Activated B cell treated with CpG ODN at 0.5 μM for 24 hours (primary cell): ENCODE measurements at regions of chr16 and their contacts with region 1.

Region 1: DNA sequence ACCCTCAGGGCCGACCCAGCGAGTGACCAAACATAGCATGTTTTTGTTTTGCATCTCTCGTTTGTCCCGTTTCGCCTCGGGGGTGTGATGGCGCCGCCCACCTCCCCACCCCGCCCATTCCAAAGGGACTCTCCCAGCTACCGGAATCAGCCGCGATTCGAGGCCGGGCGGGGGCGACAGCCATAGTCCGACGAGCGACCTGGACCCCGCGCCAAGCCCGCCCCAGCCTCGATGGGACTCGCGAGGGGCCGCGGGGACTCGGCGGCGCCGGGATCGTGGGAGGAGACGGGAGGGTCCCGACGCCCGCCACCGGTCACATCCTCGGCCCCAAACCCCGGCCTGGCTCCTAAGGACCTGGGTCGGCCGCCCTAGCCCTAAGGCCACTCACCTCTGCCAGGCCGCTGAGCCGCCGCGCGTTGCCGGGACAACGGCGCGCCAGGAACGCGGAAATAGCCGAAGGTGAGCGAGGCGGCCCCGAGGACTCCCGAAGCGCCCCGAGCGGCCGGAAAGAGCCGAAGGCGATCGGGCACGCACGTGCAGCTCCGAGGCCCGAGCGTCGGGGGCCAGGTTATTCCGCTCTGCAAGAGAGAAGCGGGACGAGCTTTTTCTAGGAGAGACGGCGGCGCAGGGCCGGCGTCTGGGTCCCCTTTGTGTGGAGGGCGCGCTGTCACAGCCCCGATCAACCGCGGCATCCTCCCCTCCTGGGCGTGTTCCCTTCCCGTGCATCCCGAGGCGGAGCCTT is 1.4 kb downstream of the IFT140 start:
- DNase-seq: peak; percentile 95
- ATAC-seq: peak; percentile 55
- H3K4me3 Mint-ChIP-seq: peak overlapping the region; percentile 88
- H3K27ac Mint-ChIP-seq: peak overlapping the region; percentile 12
- H3K4me1 Mint-ChIP-seq: peaks cover 40% of the 10 kb centered on the region
- H3K27me3 Mint-ChIP-seq: peaks cover 5% of the 10 kb centered on the region
- CTCF ChIP-seq: no peak

Region 2: GRCh38 chr16:527006-527753 is 1083.3 kb before region 1 on chr16 and contains the start of gene CAPN15:
- CTCF ChIA-PET with region 1: no interaction called
- POLR2A ChIA-PET with region 1: no interaction called
- intact Hi-C with region 1: loop called (anchors 2 kb)
- DNase-seq: peak; percentile 91
- ATAC-seq: peak; percentile 81
- H3K4me3 Mint-ChIP-seq: peak within 1 kb of the TSS; percentile 86
- H3K27ac Mint-ChIP-seq: peak within 1 kb of the TSS; percentile 82
- H3K4me1 Mint-ChIP-seq: peaks cover 43% of the 10 kb centered on the region
- H3K27me3 Mint-ChIP-seq: no peaks in the 10 kb centered on the region
- CTCF ChIP-seq: no peak
- total RNA-seq, gene CAPN15: 77.0 and 95.1 TPM in 2 replicates

Region 3: DNA sequence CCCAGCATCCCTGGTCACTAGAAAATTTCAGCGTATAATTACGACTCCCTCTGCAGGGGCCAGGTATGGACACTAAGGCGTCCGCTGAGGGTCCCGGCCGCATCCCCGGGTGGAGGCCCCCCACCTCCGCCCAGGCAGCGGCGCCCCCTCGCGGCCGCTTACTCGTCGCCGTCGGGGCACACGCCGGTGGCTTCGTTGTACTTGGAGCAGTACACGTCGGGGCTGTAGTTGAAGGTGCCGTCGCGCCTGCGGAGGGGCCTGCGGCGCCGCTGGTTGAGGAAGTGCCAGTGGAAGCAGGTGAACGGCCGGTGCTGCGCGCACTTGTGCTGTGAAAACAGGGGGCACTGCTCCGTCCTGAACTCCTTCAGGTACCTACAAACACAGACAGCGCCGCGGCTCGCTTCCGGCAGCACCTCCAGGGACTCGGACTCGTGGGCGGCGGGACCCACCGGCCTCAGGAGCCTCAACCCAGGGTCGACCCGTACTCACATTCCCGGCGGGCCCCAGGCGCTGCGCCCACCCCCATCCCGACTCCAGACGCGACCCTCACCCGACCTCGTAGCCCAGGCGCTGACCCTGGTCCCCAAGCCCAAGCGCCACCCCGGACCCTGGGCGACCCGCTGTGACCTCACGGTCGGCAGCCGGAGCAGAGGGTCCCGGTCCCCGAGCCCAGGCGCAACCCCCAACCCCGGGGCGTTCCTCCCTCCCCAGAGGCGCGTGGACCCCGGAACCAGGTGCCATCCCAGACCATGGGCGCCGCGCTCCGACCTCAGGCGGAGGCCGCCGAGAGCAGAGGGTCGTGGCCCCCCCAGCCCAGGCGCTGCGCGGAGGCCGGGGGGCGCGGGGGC is 196.5 kb before region 1 on chr16:
- CTCF ChIA-PET with region 1: no interaction called
- POLR2A ChIA-PET with region 1: no interaction called
- intact Hi-C with region 1: loop called (anchors 5 kb)
- DNase-seq: peak; percentile 61
- ATAC-seq: peak; percentile 64
- H3K4me3 Mint-ChIP-seq: peak overlapping the region; percentile 88
- H3K27ac Mint-ChIP-seq: peak overlapping the region; percentile 85
- H3K4me1 Mint-ChIP-seq: peaks cover 22% of the 10 kb centered on the region
- H3K27me3 Mint-ChIP-seq: no peaks in the 10 kb centered on the region
- CTCF ChIP-seq: no peak

Region 4: GRCh38 chr16:1474796-1475551 is 135.5 kb before region 1 on chr16 and contains the start of gene CLCN7:
- CTCF ChIA-PET with region 1: no interaction called
- POLR2A ChIA-PET with region 1: interaction called, 5 read pairs
- intact Hi-C with region 1: loop called (anchors 1 kb)
- DNase-seq: peak; percentile 91
- ATAC-seq: peak; percentile 84
- H3K4me3 Mint-ChIP-seq: peak within 1 kb of the TSS; percentile 89
- H3K27ac Mint-ChIP-seq: peak within 1 kb of the TSS; percentile 92
- H3K4me1 Mint-ChIP-seq: peaks cover 63% of the 10 kb centered on the region
- H3K27me3 Mint-ChIP-seq: no peaks in the 10 kb centered on the region
- CTCF ChIP-seq: no peak
- total RNA-seq, gene CLCN7: 127 and 144 TPM in 2 replicates

Region 5: DNA sequence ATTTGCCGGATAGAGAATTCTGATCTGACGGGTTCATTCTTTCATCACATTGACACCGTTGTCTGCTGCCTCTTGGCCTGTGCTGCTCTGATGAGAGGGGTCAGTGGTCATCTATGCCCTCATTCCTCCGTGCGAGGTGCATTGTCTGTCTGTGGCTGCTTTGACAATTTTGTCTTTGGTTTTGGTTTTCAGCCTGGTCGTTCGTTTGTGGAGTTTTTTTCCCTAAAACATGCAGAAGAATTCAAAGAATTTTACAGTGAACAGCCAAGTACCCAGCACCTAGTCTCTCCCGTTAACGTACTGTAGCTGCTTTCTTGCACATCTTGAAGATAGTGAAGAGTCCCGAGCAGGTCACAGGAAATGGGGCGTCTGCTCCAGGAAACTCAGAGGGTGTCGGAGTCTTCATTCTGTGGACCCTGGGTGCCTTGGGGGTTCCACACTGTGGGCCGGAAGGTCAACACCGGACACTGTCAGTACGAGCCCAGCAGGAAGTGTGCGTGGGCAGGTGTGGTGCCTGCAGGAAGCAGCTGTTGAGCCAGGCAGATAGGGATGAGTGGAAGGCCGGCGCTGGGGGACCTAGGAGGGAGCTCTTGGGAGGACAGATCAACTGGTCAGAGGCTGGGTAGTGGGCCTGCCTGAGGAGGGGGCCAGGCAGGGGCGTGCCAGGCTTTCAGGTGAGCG is 30.0 kb after region 1 on chr16:
- CTCF ChIA-PET with region 1: no interaction called
- POLR2A ChIA-PET with region 1: no interaction called
- intact Hi-C with region 1: no loop called
- DNase-seq: no peak
- ATAC-seq: no peak
- H3K4me3 Mint-ChIP-seq: no peak overlapping the region
- H3K27ac Mint-ChIP-seq: no peak overlapping the region
- H3K4me1 Mint-ChIP-seq: peaks cover 4% of the 10 kb centered on the region
- H3K27me3 Mint-ChIP-seq: no peaks in the 10 kb centered on the region
- CTCF ChIP-seq: no peak

Region 6: DNA sequence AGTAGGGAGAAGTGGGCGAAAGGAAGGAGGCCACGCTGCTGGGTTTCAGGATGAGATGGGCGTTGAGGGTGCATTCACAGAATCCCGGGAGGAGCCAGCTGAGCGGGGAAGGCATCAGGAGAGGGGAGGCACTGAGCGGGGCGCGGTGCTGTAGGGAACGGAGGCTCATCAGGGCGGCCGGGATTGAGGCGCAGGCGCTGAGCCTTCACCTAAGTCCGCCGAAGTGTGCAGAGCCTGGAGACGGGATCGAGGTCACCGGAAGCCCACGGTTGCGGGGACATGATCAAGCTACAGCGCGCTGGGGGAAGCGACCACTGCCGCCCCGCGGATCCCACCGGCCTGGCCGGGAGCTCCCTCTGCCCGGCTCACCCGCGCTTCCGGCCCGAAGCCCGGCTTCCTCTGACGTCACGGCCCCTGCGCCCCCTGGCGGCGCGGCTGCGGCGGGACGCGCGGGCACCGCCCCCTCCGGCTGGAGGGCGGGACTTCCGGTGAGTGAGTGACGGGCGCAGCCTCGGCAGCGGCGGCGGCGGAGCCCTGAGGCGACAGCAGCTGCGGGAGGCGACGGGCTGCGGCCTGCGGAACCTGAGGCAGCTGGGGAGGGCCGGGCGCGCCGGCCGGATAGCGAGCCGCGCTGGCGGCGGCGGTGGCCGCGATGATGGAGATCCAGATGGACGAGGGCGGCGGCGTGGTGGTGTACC is 95.4 kb after region 1 on chr16 and contains the start of gene MAPK8IP3:
- CTCF ChIA-PET with region 1: no interaction called
- POLR2A ChIA-PET with region 1: interaction called, 5 read pairs
- intact Hi-C with region 1: loop called (anchors 5 kb)
- DNase-seq: peak; percentile 100
- ATAC-seq: peak; percentile 81
- H3K4me3 Mint-ChIP-seq: peak within 1 kb of the TSS; percentile 99
- H3K27ac Mint-ChIP-seq: peak within 1 kb of the TSS; percentile 98
- H3K4me1 Mint-ChIP-seq: peaks cover 38% of the 10 kb centered on the region
- H3K27me3 Mint-ChIP-seq: no peaks in the 10 kb centered on the region
- CTCF ChIP-seq: no peak
- total RNA-seq, gene MAPK8IP3: 157 and 201 TPM in 2 replicates

Region 7: DNA sequence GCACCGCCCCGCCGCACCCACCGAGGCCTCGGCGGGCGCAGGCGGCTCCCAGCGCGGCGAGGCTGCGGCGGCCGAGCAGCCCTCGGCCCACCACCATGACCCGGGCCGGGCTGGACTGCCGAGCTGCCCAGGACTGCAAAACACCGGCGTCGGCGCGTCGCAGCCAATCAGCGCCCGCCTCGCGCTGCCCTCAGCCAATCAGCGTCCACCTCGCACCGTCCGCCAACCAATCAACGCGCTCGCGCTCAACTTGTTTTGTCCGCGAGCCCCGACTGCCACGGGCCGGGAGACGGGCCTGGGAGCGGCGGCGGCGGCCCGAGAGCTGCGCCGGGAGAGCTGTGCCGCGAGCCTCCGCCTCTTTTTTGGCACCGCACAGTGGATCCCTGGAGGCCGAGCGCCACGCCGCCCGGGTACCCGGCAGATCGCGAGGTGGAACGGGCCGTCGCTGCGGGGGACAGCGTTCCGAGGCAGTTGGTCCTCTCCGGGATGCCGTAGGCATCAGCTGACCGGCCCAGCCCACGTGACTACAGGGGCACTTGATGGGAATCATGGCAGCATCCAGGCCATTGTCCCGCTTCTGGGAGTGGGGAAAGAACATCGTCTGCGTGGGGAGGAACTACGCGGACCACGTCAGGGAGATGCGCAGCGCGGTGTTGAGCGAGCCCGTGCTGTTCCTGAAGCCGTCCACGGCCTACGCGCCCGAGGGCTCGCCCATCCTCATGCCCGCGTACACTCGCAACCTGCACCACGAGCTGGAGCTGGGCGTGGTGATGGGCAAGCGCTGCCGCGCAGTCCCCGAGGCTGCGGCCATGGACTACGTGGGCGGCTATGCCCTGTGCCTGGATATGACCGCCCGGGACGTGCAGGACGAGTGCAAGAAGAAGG is 216.5 kb after region 1 on chr16 and contains the starts of genes FAHD1 and HAGH:
- CTCF ChIA-PET with region 1: no interaction called
- POLR2A ChIA-PET with region 1: interaction called, 4 read pairs
- intact Hi-C with region 1: loop called (anchors 2 kb)
- DNase-seq: peak; percentile 95
- ATAC-seq: peak; percentile 88
- H3K4me3 Mint-ChIP-seq: peak within 1 kb of the TSS; percentile 94
- H3K27ac Mint-ChIP-seq: peak within 1 kb of the TSS; percentile 91
- H3K4me1 Mint-ChIP-seq: peaks cover 39% of the 10 kb centered on the region
- H3K27me3 Mint-ChIP-seq: no peaks in the 10 kb centered on the region
- CTCF ChIP-seq: no peak
- total RNA-seq, gene FAHD1: 10.2 and 10.4 TPM in 2 replicates
- total RNA-seq, gene HAGH: 19.0 and 19.5 TPM in 2 replicates